Activated CD4-positive, alpha-beta memory T cell treated with anti-CD3 and anti-CD28 coated beads, Interleukin-2, amount 10 ng/mL, durations not matched to agents 7 days and 5 days (primary cell): ENCODE measurements at regions of chr14 and their contacts with region 1.

Region 1: DNA sequence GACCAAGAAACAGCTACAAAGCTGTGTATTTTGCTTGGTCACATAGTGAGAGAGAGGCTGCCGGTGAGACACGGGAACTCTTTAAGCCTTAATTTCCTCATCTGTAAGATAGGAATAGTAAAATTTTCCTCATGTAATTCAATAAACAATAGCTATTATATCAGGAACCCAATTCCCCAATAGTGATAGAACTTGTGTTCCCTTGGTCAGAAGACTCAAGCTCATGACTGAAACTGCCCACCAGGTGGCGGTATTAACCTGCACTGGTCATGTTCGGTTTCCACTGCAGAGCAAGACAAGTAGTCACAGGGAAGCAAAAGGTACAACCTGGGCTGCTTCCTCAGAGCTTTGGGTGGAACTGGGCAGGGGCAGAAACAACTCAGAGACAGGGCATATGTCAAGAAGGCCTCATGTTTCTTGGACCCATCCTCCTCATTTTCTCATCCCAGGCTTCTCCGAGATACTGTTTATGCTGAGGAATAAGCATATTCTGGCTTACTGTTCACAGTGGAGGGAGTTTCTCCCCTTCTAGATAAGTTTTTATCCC is 4.2 kb upstream of the AJUBA start:
- DNase-seq: peak; percentile 90
- H3K4me3 Mint-ChIP-seq: no peak overlapping the region
- H3K27ac Mint-ChIP-seq: no peak overlapping the region
- H3K4me1 Mint-ChIP-seq: peaks cover 2% of the 10 kb centered on the region
- H3K27me3 Mint-ChIP-seq: no peaks in the 10 kb centered on the region

Region 2: DNA sequence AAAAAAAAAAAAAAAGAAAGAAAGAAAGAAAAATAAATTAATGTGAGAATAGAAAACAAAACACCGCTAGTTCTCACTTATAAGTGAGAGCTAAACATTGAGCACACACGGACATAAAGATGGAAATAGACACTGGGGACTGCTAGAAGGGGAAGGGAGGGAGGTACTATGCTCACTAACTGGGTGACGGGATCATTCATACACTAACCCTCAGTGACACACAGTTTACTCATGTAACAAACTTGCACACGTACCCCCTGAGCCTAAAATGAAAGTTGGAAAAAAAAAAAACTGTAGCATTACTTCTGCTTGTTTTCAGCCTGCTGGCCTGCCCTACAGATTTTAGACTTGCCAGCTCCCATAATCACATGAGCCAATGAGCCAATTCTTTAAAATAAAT is 46.9 kb before region 1 on chr14:
- CTCF ChIA-PET with region 1: interaction called, 10 read pairs
- POLR2A ChIA-PET with region 1: no interaction called
- DNase-seq: no peak
- H3K4me3 Mint-ChIP-seq: no peak overlapping the region
- H3K27ac Mint-ChIP-seq: no peak overlapping the region
- H3K4me1 Mint-ChIP-seq: no peaks in the 10 kb centered on the region
- H3K27me3 Mint-ChIP-seq: no peaks in the 10 kb centered on the region

Region 3: GRCh38 chr14:22973217-22974032 is 13.2 kb before region 1 on chr14:
- CTCF ChIA-PET with region 1: interaction called, 165 read pairs
- POLR2A ChIA-PET with region 1: interaction called, 10 read pairs
- DNase-seq: peak; percentile 43
- H3K4me3 Mint-ChIP-seq: no peak overlapping the region
- H3K27ac Mint-ChIP-seq: no peak overlapping the region
- H3K4me1 Mint-ChIP-seq: no peaks in the 10 kb centered on the region
- H3K27me3 Mint-ChIP-seq: peaks cover 13% of the 10 kb centered on the region

Region 4: DNA sequence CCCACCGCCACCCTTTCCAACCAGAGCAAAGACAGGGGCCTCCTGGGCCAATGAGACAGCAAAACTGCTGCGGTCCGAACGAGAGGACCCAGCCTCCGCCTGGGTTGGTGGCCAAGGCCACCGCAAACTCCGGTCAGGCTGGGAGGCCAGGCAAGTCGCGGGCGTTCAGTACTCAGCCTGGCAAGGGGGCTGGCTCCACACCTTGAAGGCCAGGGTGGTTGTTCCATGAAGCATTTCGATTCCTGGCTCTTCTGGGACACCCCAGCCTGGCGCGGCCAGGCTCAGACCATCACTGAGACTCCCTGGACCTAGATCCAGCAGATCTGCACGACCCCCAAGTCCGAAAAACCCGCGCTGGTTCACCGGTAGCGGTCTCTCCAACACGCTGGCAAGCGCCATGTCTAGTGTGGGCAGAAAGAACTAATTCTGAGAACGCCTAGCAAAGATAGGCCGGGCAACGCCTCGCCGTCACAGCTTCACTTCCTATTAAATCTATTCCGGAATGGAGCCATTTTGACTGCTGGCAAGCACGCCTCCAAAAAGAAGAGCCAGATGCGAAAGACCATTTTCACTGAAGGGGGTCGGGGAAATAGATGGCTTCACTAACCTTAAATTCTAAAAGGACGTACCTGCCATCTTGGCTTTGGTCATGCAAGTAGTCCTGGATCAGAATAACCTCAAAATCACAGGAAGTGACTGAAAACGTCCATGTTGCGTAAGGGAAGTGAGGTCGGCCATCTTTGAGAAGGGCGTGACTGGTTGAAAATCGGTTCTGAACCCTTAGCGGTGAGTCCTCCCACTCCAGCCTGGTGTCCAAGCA is 48.1 kb after region 1 on chr14 and contains the start of gene PSMB5:
- CTCF ChIA-PET with region 1: interaction called, 16 read pairs
- POLR2A ChIA-PET with region 1: no interaction called
- DNase-seq: peak; percentile 91
- H3K4me3 Mint-ChIP-seq: peak within 1 kb of the TSS; percentile 72
- H3K27ac Mint-ChIP-seq: peak within 1 kb of the TSS; percentile 86
- H3K4me1 Mint-ChIP-seq: peaks cover 36% of the 10 kb centered on the region
- H3K27me3 Mint-ChIP-seq: no peaks in the 10 kb centered on the region
- total RNA-seq, gene PSMB5: 55.0 to 57.5 TPM

Region 5: GRCh38 chr14:23068476-23069412 is 82.2 kb after region 1 on chr14:
- CTCF ChIA-PET with region 1: interaction called, 332 read pairs
- POLR2A ChIA-PET with region 1: interaction called, 3 read pairs
- DNase-seq: peak; percentile 80
- H3K4me3 Mint-ChIP-seq: no peak overlapping the region
- H3K27ac Mint-ChIP-seq: peak overlapping the region; percentile 36
- H3K4me1 Mint-ChIP-seq: peaks cover 37% of the 10 kb centered on the region
- H3K27me3 Mint-ChIP-seq: no peaks in the 10 kb centered on the region

Region 6: GRCh38 chr14:23127876-23128275 is 141.3 kb after region 1 on chr14:
- CTCF ChIA-PET with region 1: no interaction called
- POLR2A ChIA-PET with region 1: no interaction called
- DNase-seq: no peak
- H3K4me3 Mint-ChIP-seq: no peak overlapping the region
- H3K27ac Mint-ChIP-seq: peak overlapping the region; percentile 23
- H3K4me1 Mint-ChIP-seq: peaks cover 14% of the 10 kb centered on the region
- H3K27me3 Mint-ChIP-seq: peaks cover 10% of the 10 kb centered on the region

Region 7: GRCh38 chr14:23209651-23210423 is 223.3 kb after region 1 on chr14:
- CTCF ChIA-PET with region 1: no interaction called
- POLR2A ChIA-PET with region 1: no interaction called
- DNase-seq: no peak
- H3K4me3 Mint-ChIP-seq: no peak overlapping the region
- H3K27ac Mint-ChIP-seq: no peak overlapping the region
- H3K4me1 Mint-ChIP-seq: no peaks in the 10 kb centered on the region
- H3K27me3 Mint-ChIP-seq: peaks cover 18% of the 10 kb centered on the region